B cell (primary cell): ENCODE measurements at regions of chr5 and their contacts with region 1.

Region 1: GRCh38 chr5:65076251-65076869 is 307.6 kb downstream of the CWC27 start:
- DNase-seq: peak; percentile 73
- ATAC-seq: peak; percentile 93
- H3K4me3 ChIP-seq: no peak overlapping the region
- H3K4me3 Mint-ChIP-seq: no peak overlapping the region
- H3K27ac ChIP-seq: no peak overlapping the region
- H3K27ac Mint-ChIP-seq: no peak overlapping the region
- H3K4me1 ChIP-seq: peaks cover 10 to 15% of the 10 kb centered on the region in 2 donors
- H3K4me1 Mint-ChIP-seq: peaks cover 13% of the 10 kb centered on the region
- H3K27me3 ChIP-seq: no peaks in the 10 kb centered on the region
- H3K27me3 Mint-ChIP-seq: no peaks in the 10 kb centered on the region
- CTCF ChIP-seq: peak; percentile 56

Region 2: DNA sequence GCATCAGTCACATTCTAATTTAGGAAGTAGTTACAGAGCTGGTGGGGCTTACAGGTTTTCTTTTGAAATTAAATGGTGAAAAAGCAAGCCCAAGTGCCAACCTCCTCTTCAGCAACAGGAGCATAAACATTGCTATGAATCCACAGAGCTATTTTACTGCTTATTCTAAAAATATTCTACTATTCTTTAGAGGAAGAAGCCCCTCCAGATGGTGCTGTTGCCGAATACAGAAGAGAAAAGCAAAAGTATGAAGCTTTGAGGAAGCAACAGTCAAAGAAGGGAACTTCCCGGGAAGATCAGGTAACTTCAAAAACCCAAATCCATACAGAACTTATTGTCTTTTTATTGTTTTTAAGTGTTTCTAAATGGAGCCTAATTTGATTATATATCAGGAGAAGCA is 104.8 kb before region 1 on chr5:
- CTCF ChIA-PET with region 1: no interaction called
- POLR2A ChIA-PET with region 1: no interaction called
- intact Hi-C with region 1: loop called (anchors 10 kb)
- DNase-seq: peak; percentile 28
- ATAC-seq: no peak
- H3K4me3 ChIP-seq: no peak overlapping the region
- H3K4me3 Mint-ChIP-seq: no peak overlapping the region
- H3K27ac ChIP-seq: no peak overlapping the region
- H3K27ac Mint-ChIP-seq: no peak overlapping the region
- H3K4me1 ChIP-seq: no peaks in the 10 kb centered on the region
- H3K4me1 Mint-ChIP-seq: peaks cover 1% of the 10 kb centered on the region
- H3K27me3 ChIP-seq: no peaks in the 10 kb centered on the region
- H3K27me3 Mint-ChIP-seq: no peaks in the 10 kb centered on the region
- CTCF ChIP-seq: peak; percentile 13

Region 3: GRCh38 chr5:65086234-65086890 is 10.0 kb after region 1 on chr5:
- CTCF ChIA-PET with region 1: no interaction called
- POLR2A ChIA-PET with region 1: no interaction called
- intact Hi-C with region 1: no loop called
- DNase-seq: no peak
- ATAC-seq: no peak
- H3K4me3 ChIP-seq: no peak overlapping the region
- H3K4me3 Mint-ChIP-seq: no peak overlapping the region
- H3K27ac ChIP-seq: no peak overlapping the region
- H3K27ac Mint-ChIP-seq: no peak overlapping the region
- H3K4me1 ChIP-seq: no peaks in the 10 kb centered on the region
- H3K4me1 Mint-ChIP-seq: no peaks in the 10 kb centered on the region
- H3K27me3 ChIP-seq: no peaks in the 10 kb centered on the region
- H3K27me3 Mint-ChIP-seq: no peaks in the 10 kb centered on the region
- CTCF ChIP-seq: no peak